Activated CD4-positive, alpha-beta T cell treated with anti-CD3 and anti-CD28 coated beads, Interleukin-2, amount 10 ng/mL, durations not matched to agents 7 days and 5 days (primary cell): ENCODE measurements at regions of chr3 and their contacts with region 1.

Region 1: GRCh38 chr3:129399145-129399894 is 29.1 kb downstream of the EFCAB12 start:
- DNase-seq: peak; percentile 89
- H3K4me3 Mint-ChIP-seq: peak overlapping the region; percentile 90
- H3K27ac Mint-ChIP-seq: peak overlapping the region; percentile 97
- H3K4me1 Mint-ChIP-seq: peaks cover 41% of the 10 kb centered on the region
- H3K27me3 Mint-ChIP-seq: no peaks in the 10 kb centered on the region

Region 2: GRCh38 chr3:129413687-129414506 is 14.6 kb after region 1 on chr3:
- CTCF ChIA-PET with region 1: interaction called, 25 read pairs
- POLR2A ChIA-PET with region 1: no interaction called
- DNase-seq: no peak
- H3K4me3 Mint-ChIP-seq: no peak overlapping the region
- H3K27ac Mint-ChIP-seq: no peak overlapping the region
- H3K4me1 Mint-ChIP-seq: no peaks in the 10 kb centered on the region
- H3K27me3 Mint-ChIP-seq: no peaks in the 10 kb centered on the region